Tibial artery (tissue), 4 donors: ENCODE measurements at regions of chr3 and their contacts with region 1.

Region 1: GRCh38 chr3:49831341-49831740 is 17.6 kb upstream of the UBA7 start:
- DNase-seq: no peak
- H3K4me3 ChIP-seq: no peak overlapping the region
- H3K27ac ChIP-seq: no peak overlapping the region
- H3K4me1 ChIP-seq: no peaks in the 10 kb centered on the region
- H3K27me3 ChIP-seq: no peaks in the 10 kb centered on the region
- CTCF ChIP-seq: no peak

Region 2: DNA sequence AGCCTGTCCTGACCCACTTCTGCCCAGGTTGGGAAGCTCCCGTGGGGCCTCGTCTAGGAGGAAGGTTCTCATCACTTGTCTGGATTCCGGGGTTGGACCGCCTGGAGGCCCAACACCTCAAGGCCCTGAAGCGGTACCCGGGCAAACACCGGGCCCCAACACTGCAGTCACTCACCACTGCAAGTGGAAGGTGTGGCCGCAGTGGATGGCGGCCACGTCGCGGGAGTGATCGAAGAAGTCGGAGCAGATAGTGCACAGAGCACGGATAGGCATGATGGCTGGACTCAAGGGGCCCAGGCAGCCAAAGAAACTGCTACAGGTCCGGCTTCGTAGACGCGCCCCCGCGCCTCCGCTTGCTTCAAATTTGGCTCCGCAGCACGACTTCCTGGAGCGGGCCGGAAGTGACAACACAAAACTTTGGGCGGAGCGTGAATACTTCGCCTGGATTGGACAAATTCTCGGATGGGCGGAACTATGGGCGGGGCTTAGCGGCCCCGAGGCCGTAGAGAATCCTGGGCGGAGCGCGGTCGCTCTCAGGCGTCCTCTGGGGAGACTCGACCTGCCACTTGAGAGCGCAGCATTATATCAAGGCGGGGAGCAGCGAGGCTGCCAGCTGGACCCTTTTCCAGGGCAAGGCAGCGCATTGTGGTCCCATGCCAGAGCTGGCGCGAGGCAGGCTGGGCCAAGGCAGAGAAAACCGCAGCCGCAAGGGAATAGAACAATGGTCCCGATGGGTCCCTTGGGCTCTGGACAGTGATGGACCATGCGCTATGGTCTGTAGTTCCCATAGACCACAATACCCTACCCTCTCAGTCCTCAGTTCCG is 25.1 kb after region 1 on chr3 and contains the start of gene TRAIP:
- intact Hi-C with region 1: loop called (anchors 1 kb)
- DNase-seq: peak; percentile 92 to 96
- H3K4me3 ChIP-seq: peak within 1 kb of the TSS; percentile 54 to 63
- H3K27ac ChIP-seq: peak within 1 kb of the TSS; percentile 76 to 86
- H3K4me1 ChIP-seq: peaks cover 0 to 14% (median 11%) of the 10 kb centered on the region in 4 donors
- H3K27me3 ChIP-seq: no peaks in the 10 kb centered on the region
- CTCF ChIP-seq: no peak

Region 3: GRCh38 chr3:49952924-49953323 is 121.6 kb after region 1 on chr3:
- intact Hi-C with region 1: no loop called
- DNase-seq: no peak
- H3K4me3 ChIP-seq: no peak overlapping the region
- H3K27ac ChIP-seq: no peak overlapping the region
- H3K4me1 ChIP-seq: peaks cover 0 to 39% (median 8%) of the 10 kb centered on the region in 4 donors
- H3K27me3 ChIP-seq: no peaks in the 10 kb centered on the region
- CTCF ChIP-seq: no peak